Breast epithelium (tissue), 4 donors: ENCODE measurements at regions of chr7 and their contacts with region 1.

Region 1: DNA sequence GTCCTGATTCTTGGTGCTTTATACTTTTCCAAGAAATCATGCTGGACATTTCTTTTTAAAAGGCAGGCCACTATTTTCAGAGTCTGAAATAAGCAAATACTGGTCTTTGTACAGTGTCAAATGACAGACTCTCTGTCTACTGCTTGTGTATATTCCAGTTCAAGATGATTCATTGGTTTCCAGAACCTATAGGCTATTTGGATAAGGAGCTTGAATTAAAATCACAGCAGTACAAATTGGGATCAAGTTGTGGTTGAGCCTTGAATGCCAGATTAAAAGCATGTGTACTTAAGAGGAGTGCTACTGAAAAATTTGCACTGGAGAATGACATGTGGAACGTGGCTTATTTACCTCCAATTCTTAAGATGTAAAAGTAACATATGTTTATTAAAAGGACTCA is 10.7 kb downstream of the KMT2E start:
- DNase-seq: no peak
- H3K4me3 ChIP-seq: no peak overlapping the region
- H3K27ac ChIP-seq: peak overlapping the region in 1 of 2 donors; percentile 25
- H3K4me1 ChIP-seq: peaks cover 3 to 41% of the 10 kb centered on the region in 2 donors
- H3K27me3 ChIP-seq: no peaks in the 10 kb centered on the region
- CTCF ChIP-seq: no peak
- POLR2A ChIP-seq: no peak

Region 2: GRCh38 chr7:104931181-104931781 is 93.5 kb before region 1 on chr7:
- intact Hi-C with region 1: loop called (anchors 10 kb)
- DNase-seq: no peak
- H3K4me3 ChIP-seq: no peak overlapping the region
- H3K27ac ChIP-seq: peak overlapping the region in 1 of 2 donors; percentile 44
- H3K4me1 ChIP-seq: no peaks in the 10 kb centered on the region
- H3K27me3 ChIP-seq: no peaks in the 10 kb centered on the region
- CTCF ChIP-seq: no peak
- POLR2A ChIP-seq: no peak

Region 3: GRCh38 chr7:105036217-105037168 is 11.8 kb after region 1 on chr7:
- intact Hi-C with region 1: no loop called
- DNase-seq: no peak
- H3K4me3 ChIP-seq: no peak overlapping the region
- H3K27ac ChIP-seq: no peak overlapping the region
- H3K4me1 ChIP-seq: no peaks in the 10 kb centered on the region
- H3K27me3 ChIP-seq: no peaks in the 10 kb centered on the region
- CTCF ChIP-seq: no peak
- POLR2A ChIP-seq: no peak